Esophagus squamous epithelium (tissue), 5 donors: ENCODE measurements at regions of chr14 and their contacts with region 1.

Region 1: DNA sequence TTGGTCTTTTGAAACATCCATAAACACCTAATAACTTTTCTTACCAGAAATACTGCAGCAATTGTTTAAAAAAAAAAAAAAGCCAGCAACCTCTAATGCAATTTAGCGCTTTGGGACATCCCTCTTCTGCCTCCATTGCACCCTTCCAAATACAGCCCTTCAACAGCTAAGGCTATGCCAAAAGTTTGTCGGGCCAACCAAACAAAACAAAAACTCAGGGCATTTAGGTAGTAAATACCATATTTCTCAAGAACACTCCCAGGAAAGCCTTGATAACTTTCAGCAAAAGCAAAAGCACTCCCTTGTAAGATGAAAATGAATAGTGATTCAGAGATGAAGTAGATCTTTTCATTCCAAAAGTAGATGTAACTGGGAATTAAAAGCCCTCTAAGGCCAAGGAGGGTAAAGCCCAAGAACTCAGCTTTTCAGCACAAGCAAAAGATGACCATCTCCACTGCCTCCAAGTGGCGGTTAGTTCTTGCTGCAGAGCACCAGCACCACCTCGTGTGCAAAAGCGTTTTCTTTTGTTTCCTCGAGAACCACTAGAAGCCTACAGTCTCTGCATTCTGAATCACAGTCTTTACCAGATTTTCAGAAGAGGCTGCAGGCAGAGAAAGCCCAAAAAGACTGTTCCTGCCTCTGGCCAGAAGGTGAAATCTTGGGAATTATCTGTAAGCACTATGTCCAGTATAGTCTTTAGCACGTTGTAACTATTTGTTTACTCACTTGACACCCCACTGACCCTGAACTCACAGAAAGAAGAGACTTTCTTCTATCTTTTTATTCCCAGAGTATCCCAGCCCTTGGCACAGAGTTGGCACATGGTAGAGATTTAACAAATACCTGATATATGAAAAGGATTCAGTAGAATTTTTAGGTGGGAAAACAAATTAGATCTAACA is 53.1 kb downstream of the SIX6 start:
- DNase-seq: no peak
- H3K4me3 ChIP-seq: no peak overlapping the region
- H3K27ac ChIP-seq: no peak overlapping the region
- H3K4me1 ChIP-seq: no peaks in the 10 kb centered on the region
- H3K27me3 ChIP-seq: no peaks in the 10 kb centered on the region
- CTCF ChIP-seq: peak in 5 of 6 experiments; percentile 13 to 49 (median 24)
- POLR2A ChIP-seq: no peak

Region 2: DNA sequence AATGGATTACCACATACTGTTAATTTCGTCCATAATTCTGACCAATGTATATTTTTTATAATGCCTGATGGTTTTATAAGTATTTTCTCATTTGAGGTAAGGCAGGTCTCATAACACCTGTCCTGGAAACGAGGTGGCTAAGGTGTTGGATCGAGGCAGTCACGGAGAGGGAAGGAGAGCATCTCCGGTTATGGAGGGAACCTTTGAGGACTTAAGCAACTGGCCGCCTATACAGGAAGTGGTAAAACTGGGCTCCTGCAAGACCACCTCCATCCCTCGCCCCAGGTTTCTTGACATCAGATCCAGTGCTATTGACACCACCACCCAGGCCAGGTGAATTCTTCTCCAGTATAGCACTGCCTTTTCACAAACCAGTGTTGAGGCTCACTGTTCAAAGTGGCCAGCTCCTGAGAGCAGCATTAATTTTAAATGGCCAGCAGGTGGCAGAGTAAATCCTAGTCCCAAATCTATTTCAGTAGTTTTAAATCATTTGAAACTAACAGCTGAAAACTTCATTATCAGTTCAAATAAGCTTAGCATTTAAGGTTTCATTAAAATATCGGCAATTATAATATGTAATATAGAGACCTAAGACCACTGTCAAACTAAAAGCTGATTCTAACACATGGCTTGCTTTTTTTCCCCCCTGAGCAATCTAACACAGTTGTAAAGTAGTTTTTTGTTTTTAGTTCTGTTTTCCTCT is 212.3 kb before region 1 on chr14:
- intact Hi-C with region 1: loop called (anchors 10 kb)
- DNase-seq: no peak
- H3K4me3 ChIP-seq: no peak overlapping the region
- H3K27ac ChIP-seq: no peak overlapping the region
- H3K4me1 ChIP-seq: no peaks in the 10 kb centered on the region
- H3K27me3 ChIP-seq: peaks cover 0 to 3% (median 0%) of the 10 kb centered on the region in 4 donors
- CTCF ChIP-seq: peak; percentile 36 to 64 (median 54)
- POLR2A ChIP-seq: no peak